ENCODE measurements at regions of chr11 and their contacts with region 1.

Region 1: DNA sequence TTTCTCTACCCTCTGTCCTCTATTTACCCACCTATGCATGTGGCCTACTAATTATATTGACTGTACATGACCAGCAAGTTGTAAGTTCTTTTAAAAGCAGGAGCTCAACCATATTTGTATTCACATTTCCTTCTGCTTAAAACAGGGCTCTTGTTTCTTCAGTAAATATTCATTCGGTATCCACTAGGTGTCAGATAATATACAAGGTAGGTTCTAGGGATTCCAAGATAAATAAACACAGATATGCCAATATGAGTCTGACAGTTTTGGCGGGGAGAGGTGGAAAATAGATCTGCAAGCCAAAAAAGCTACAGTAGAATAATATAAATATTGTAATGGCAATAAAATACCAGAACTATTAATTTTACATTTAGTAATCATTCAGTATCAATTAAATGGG is 15.3 kb upstream of the RAB30 start:
- DNase-seq: no peak
- H3K4me3 ChIP-seq: no peak overlapping the region
- H3K27ac ChIP-seq: peak overlapping the region in 1 of 2 donors; percentile 13
- H3K4me1 ChIP-seq: peaks cover 0 to 5% of the 10 kb centered on the region in 2 donors
- H3K27me3 ChIP-seq: no peaks in the 10 kb centered on the region
- CTCF ChIP-seq: peak; percentile 13 to 36 (median 26)
- POLR2A ChIP-seq: no peak

Region 2: GRCh38 chr11:82924522-82925224 is 162.4 kb before region 1 on chr11:
- intact Hi-C with region 1: no loop called
- DNase-seq: no peak
- H3K4me3 ChIP-seq: no peak overlapping the region
- H3K27ac ChIP-seq: no peak overlapping the region
- H3K4me1 ChIP-seq: no peaks in the 10 kb centered on the region
- H3K27me3 ChIP-seq: no peaks in the 10 kb centered on the region
- CTCF ChIP-seq: no peak
- POLR2A ChIP-seq: no peak

Region 3: DNA sequence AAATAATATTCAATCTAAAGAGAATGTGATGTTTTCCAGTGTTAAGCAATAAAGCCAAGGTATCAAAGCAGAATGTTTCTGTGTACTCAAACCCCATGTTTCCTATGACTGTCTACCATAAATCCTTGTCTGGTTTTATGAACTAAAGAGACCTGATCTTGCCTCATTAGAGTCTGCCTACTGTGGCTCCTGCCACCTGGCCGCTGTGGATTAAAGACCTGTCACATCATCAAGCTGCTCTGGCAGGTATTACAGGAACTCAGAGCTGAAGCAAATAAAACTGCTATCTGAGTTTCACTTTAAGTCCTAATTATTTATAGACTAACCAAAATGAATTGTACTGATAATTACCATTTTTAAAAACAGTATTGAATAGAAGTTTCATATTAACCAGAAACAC is 406.9 kb after region 1 on chr11:
- intact Hi-C with region 1: loop called (anchors 10 kb)
- DNase-seq: no peak
- H3K4me3 ChIP-seq: no peak overlapping the region
- H3K27ac ChIP-seq: no peak overlapping the region
- H3K4me1 ChIP-seq: no peaks in the 10 kb centered on the region
- H3K27me3 ChIP-seq: no peaks in the 10 kb centered on the region
- CTCF ChIP-seq: no peak
- POLR2A ChIP-seq: no peak